Dorsolateral prefrontal cortex (tissue), 120 donors: ENCODE measurements at regions of chr10 and their contacts with region 1.

Region 1: DNA sequence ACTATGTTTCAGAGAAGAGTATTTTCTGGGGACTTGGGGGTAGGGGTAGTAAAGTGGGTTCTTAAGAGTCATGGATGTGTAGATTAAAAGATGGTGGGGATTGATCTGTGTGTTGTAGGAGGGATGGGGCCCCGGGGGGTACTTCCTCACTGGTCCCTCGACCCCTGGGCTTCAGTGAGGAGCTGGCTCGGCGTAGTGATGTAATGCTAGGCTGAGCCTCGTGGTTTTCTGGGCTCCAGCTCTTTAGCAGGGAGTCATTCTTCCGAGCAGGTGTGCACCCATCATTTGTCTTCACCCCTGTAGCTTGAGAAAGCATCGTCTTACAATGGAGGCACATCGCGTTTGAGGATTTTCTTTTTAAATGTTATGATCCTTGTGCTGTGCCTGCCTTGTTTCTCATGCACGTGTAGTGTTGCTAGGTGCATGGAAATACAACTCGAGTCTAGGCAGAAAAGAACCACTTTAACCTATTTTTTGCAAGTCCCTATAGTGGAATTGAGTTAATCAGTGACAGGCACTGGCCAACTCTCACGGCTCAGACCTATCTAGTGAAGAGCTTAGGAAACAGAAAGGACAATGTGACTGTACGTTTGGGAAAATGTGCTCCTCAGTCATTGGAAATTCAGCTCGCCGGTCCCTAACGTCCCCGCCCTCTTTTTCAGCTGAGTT is 106.1 kb upstream of the BTBD16 start:
- DNase-seq: no peak
- H3K4me3 ChIP-seq: peak overlapping the region in 58 of 59 donors; percentile 52 to 84 (median 72)
- H3K27ac ChIP-seq: peak overlapping the region in 37 of 59 donors; percentile 9 to 95 (median 89)
- H3K27me3 ChIP-seq: no peaks in the 10 kb centered on the region
- CTCF ChIP-seq: no peak

Region 2: GRCh38 chr10:122126763-122127659 is 37.9 kb before region 1 on chr10:
- intact Hi-C with region 1: no loop called
- DNase-seq: no peak
- H3K4me3 ChIP-seq: no peak overlapping the region
- H3K27ac ChIP-seq: peak overlapping the region in 2 of 59 donors; percentile 13 to 31
- H3K27me3 ChIP-seq: peaks cover 0 to 6% (median 0%) of the 10 kb centered on the region in 45 donors
- CTCF ChIP-seq: no peak

Region 3: DNA sequence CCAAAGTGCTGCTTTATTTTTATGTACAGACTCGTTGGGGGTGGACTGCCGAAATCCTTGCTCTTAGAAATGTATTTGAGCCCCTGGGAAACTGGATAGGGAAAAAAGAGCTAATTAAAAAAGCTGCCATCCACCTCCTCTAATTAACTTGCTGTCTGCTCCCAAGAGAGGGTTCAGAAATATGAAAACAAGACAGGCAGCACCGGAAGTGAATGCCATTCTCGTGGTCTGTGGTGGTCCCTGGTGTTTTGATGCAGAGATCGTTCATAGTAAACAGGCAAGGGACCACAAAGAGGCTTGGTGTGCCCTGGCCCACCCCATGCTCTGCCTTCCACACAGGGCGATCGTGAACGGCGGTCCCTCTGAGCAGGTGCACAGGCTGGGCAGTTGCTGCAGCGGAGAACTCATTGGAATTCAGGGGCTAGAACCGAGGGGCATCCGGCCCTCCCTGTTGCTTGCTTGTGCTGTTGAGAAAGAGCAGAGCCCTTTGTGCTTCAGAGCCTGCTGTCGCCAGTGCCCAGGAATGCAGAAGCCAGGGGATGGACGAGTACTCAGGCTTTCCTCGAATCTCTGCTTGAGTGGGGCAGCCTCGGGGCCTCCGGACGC is 27.1 kb after region 1 on chr10:
- intact Hi-C with region 1: no loop called
- DNase-seq: peak in 7 of 10 donors; percentile 28 to 65 (median 56)
- H3K4me3 ChIP-seq: peak overlapping the region in 50 of 59 donors; percentile 0 to 57 (median 38)
- H3K27ac ChIP-seq: peak overlapping the region in 28 of 59 donors; percentile 3 to 63 (median 36)
- H3K27me3 ChIP-seq: no peaks in the 10 kb centered on the region
- CTCF ChIP-seq: no peak

Region 4: DNA sequence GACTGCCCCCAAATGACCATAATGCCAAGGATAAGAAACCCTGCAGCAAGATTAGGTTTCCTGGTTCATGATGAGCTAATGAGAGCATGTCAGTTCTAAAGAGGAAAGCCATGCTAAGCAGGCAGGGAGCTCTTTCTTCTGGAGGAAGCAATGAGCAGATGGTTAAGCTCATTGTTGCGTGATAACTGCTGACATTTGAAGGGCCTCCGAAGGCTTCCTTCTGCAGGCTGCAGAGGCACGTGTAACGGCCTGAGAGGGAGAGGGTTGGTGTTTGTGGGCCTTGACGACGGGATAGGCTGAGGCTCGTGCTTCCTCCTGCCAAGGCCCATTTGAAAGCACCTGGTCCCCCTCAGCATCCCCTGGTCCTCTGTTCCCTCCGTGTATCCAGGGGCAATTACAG is 42.6 kb after region 1 on chr10:
- intact Hi-C with region 1: loop called in 1 of 2 experiments (anchors 5 kb)
- DNase-seq: peak in 1 of 10 donors; percentile 26
- H3K4me3 ChIP-seq: no peak overlapping the region
- H3K27ac ChIP-seq: peak overlapping the region in 5 of 59 donors; percentile 2 to 37 (median 26)
- H3K27me3 ChIP-seq: no peaks in the 10 kb centered on the region
- CTCF ChIP-seq: no peak